ENCODE measurements at regions of chr11 and their contacts with region 1.

Region 1: GRCh38 chr11:6531267-6531752 is 34.2 kb downstream of the DNHD1 start:
- DNase-seq: no peak
- ATAC-seq: no peak
- H3K4me3 ChIP-seq: no peak overlapping the region
- H3K27ac ChIP-seq: no peak overlapping the region
- H3K4me1 ChIP-seq: no peaks in the 10 kb centered on the region
- H3K27me3 ChIP-seq: no peaks in the 10 kb centered on the region

Region 2: GRCh38 chr11:6443269-6444003 is 87.9 kb before region 1 on chr11:
- intact Hi-C with region 1: no loop called
- DNase-seq: peak; percentile 58 to 78
- ATAC-seq: peak; percentile 82
- H3K4me3 ChIP-seq: no peak overlapping the region
- H3K27ac ChIP-seq: no peak overlapping the region
- H3K4me1 ChIP-seq: no peaks in the 10 kb centered on the region
- H3K27me3 ChIP-seq: no peaks in the 10 kb centered on the region

Region 3: GRCh38 chr11:6635082-6635932 is 104.0 kb after region 1 on chr11:
- intact Hi-C with region 1: no loop called
- DNase-seq: no peak
- ATAC-seq: peak; percentile 52
- H3K4me3 ChIP-seq: no peak overlapping the region
- H3K27ac ChIP-seq: no peak overlapping the region
- H3K4me1 ChIP-seq: no peaks in the 10 kb centered on the region
- H3K27me3 ChIP-seq: no peaks in the 10 kb centered on the region

Region 4: GRCh38 chr11:6667733-6668374 is 136.5 kb after region 1 on chr11:
- intact Hi-C with region 1: loop called in 1 of 2 experiments (anchors 2 kb)
- DNase-seq: no peak
- ATAC-seq: peak; percentile 56
- H3K4me3 ChIP-seq: no peak overlapping the region
- H3K27ac ChIP-seq: no peak overlapping the region
- H3K4me1 ChIP-seq: peaks cover 0 to 2% of the 10 kb centered on the region in 2 donors
- H3K27me3 ChIP-seq: no peaks in the 10 kb centered on the region

Region 5: GRCh38 chr11:6705905-6706535 is 174.7 kb after region 1 on chr11:
- intact Hi-C with region 1: loop called in 1 of 2 experiments (anchors 5 kb)
- DNase-seq: no peak
- ATAC-seq: peak; percentile 84
- H3K4me3 ChIP-seq: no peak overlapping the region
- H3K27ac ChIP-seq: no peak overlapping the region
- H3K4me1 ChIP-seq: no peaks in the 10 kb centered on the region
- H3K27me3 ChIP-seq: no peaks in the 10 kb centered on the region